Activated B cell treated with CpG ODN at 0.5 μM for 24 hours (primary cell): ENCODE measurements at regions of chr6 and their contacts with region 1.

Region 1: DNA sequence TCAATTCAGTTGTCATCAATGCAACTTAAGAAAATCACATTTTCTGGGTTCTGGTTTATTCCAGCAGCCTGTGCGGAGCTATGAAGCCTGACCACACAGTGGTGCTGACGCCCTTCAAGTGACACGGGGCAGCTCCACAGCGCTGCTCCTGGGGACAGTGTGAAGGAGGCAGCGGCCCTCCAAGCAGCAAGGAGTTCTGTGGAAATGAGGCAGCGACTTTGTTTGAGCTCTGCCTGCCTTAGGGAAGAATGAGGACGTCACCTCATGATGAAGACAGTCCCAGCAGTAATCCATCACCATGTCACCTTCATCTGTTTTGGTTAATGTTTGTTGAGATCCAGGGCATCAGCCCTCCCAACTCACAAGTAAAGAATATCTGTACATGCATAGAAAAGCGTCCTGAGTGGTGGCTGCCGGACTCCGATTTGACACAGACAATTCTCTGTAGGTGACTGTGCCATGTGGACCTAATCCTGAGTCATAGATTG is 168.5 kb upstream of the UST start:
- DNase-seq: peak; percentile 56
- ATAC-seq: peak; percentile 100
- H3K4me3 Mint-ChIP-seq: no peak overlapping the region
- H3K27ac Mint-ChIP-seq: peak overlapping the region; percentile 55
- H3K4me1 Mint-ChIP-seq: peaks cover 14% of the 10 kb centered on the region
- H3K27me3 Mint-ChIP-seq: peaks cover 7% of the 10 kb centered on the region
- CTCF ChIP-seq: no peak

Region 2: GRCh38 chr6:148677594-148678476 is 99.5 kb after region 1 on chr6:
- CTCF ChIA-PET with region 1: interaction called, 12 read pairs
- POLR2A ChIA-PET with region 1: interaction called, 4 read pairs
- intact Hi-C with region 1: no loop called
- DNase-seq: no peak
- ATAC-seq: peak; percentile 76
- H3K4me3 Mint-ChIP-seq: peak overlapping the region; percentile 56
- H3K27ac Mint-ChIP-seq: peak overlapping the region; percentile 86
- H3K4me1 Mint-ChIP-seq: peaks cover 67% of the 10 kb centered on the region
- H3K27me3 Mint-ChIP-seq: no peaks in the 10 kb centered on the region
- CTCF ChIP-seq: no peak

Region 3: DNA sequence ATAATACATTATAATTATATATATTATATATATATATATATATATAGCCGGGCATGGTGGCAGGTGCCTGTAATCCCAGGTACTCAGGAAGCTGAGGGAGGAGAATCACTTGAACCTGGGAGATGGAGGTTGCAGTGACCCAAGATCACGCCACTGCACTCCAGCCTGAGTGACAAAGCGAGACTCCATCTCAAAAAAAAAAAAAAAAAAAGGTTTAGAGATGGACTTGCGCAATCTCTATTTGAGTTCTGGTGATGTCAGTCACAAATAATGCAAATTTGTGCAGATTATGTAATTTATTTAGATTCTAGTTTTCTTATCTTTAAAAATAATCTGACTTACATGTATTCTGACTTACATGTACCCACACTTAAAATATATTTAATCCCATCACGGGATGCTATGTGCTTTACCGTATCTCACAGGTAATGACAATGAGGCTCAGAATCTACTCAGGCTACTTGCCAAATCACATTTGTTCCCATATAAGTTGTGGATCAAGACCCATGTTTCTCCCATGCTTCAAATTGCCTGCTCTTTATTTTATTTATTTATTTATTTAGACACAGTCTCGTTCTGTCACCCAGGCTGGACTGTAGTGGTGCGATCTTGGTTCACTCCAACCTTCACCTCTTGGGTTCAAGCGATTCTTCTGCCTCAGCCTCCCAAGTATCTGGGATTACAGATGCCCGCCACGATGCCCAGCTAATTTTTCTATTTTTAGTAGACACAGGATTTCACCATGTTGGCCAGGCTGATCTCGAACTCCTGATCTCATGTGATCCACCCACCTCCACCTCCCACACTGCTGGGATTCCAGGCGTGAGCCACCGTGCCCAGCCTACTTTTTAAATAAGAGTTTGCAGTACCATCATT is 160.9 kb after region 1 on chr6:
- CTCF ChIA-PET with region 1: interaction called, 11 read pairs
- POLR2A ChIA-PET with region 1: no interaction called
- intact Hi-C with region 1: no loop called
- DNase-seq: no peak
- ATAC-seq: no peak
- H3K4me3 Mint-ChIP-seq: no peak overlapping the region
- H3K27ac Mint-ChIP-seq: no peak overlapping the region
- H3K4me1 Mint-ChIP-seq: peaks cover 20% of the 10 kb centered on the region
- H3K27me3 Mint-ChIP-seq: no peaks in the 10 kb centered on the region
- CTCF ChIP-seq: no peak

Region 4: DNA sequence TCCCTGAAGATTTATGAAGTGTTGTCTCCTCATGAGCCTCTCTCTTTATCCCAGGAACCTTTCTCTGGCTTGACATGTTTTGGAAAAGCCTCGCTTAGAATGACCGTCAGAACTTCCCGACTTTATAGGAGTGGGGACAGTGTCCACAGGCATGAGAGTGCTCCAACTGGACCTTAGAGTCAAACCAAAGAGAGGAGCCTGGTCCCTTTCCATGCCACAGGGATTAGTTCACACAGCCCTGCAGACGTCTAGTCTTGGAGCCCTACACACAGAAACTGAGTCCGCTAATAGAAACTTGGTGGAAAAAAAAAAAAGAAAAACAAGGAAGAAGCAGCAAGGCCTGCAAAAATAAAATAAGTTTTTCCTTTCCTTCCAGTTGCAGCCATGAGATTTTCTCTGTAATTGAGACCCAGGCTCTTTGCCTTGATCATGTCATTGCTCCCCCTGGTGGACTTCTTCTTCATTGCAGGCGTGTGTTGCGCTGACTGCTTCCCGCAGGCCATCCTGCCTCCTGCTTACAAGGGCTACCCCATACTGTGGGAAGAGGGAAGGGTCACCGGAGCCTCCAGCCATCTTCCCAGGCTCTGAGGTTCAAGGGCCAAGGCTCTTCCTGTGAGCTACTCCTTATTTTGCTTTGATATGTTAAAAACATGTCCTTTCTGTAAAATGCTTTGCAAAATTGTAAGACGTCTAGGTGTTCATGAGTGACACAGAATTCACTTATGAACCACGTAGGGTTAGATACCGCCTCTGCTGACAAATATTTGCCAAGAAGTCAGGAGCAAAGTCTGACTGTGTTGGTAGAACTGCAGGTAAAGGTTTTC is 369.5 kb after region 1 on chr6:
- CTCF ChIA-PET with region 1: interaction called, 47 read pairs
- POLR2A ChIA-PET with region 1: no interaction called
- intact Hi-C with region 1: loop called (anchors 1 kb)
- DNase-seq: peak; percentile 61
- ATAC-seq: peak; percentile 96
- H3K4me3 Mint-ChIP-seq: no peak overlapping the region
- H3K27ac Mint-ChIP-seq: no peak overlapping the region
- H3K4me1 Mint-ChIP-seq: peaks cover 12% of the 10 kb centered on the region
- H3K27me3 Mint-ChIP-seq: no peaks in the 10 kb centered on the region
- CTCF ChIP-seq: peak; percentile 84

Region 5: GRCh38 chr6:149431905-149432775 is 853.9 kb after region 1 on chr6:
- CTCF ChIA-PET with region 1: interaction called, 18 read pairs
- POLR2A ChIA-PET with region 1: no interaction called
- intact Hi-C with region 1: loop called (anchors 5 kb)
- DNase-seq: peak; percentile 77
- ATAC-seq: peak; percentile 96
- H3K4me3 Mint-ChIP-seq: peak overlapping the region; percentile 44
- H3K27ac Mint-ChIP-seq: no peak overlapping the region
- H3K4me1 Mint-ChIP-seq: peaks cover 4% of the 10 kb centered on the region
- H3K27me3 Mint-ChIP-seq: no peaks in the 10 kb centered on the region
- CTCF ChIP-seq: no peak

Region 6: DNA sequence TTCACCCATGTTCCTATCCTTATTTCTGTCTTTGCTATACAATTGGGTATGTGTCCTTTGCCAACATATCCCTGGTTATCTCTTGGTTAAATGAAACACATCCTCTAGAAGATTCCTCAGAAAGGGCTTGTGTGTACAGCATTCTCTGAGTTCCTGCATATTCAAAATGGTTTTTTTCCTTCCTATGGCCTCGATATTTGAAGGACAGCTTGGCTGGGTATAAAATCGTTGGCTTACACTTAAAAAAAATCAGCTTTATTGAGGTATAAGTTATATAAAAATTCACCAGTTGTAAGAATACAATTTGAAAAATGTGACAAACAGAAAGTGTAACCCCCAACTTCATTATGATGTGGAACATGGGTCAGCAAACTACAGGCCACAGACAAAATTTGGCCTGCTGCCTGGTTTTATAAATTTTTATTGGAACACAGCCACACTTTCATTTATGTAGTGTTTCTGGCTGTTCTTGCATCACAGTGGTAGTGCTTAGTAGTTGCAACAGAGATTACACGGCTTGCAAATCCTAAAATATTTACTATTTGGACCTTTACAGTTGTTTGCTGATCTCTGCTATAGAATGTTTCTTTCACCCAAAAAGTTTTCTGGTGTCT is 1188.0 kb after region 1 on chr6:
- CTCF ChIA-PET with region 1: no interaction called
- POLR2A ChIA-PET with region 1: no interaction called
- intact Hi-C with region 1: no loop called
- DNase-seq: no peak
- ATAC-seq: no peak
- H3K4me3 Mint-ChIP-seq: no peak overlapping the region
- H3K27ac Mint-ChIP-seq: no peak overlapping the region
- H3K4me1 Mint-ChIP-seq: peaks cover 19% of the 10 kb centered on the region
- H3K27me3 Mint-ChIP-seq: no peaks in the 10 kb centered on the region
- CTCF ChIP-seq: no peak

Region 7: DNA sequence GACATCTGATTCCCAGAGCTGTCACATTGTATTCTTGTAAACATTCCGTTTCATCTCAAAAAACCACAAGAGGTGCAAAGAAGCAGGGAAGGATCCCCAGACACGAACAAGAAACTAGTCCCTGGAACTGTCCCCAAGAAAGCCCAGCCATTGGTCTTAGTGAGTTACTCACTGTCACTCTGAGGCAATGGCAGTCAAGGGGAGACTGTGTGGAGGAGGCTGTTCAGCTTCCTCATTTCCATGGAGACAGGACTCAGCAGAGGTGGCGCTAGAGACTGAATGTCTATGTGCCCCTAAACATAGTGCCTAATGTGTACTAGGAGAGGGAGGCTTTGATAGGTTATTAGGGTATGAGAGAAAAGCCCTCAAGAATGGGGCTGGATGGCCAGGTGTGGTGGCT is 1396.5 kb after region 1 on chr6:
- CTCF ChIA-PET with region 1: no interaction called
- POLR2A ChIA-PET with region 1: no interaction called
- intact Hi-C with region 1: no loop called
- DNase-seq: no peak
- ATAC-seq: no peak
- H3K4me3 Mint-ChIP-seq: no peak overlapping the region
- H3K27ac Mint-ChIP-seq: no peak overlapping the region
- H3K4me1 Mint-ChIP-seq: no peaks in the 10 kb centered on the region
- H3K27me3 Mint-ChIP-seq: peaks cover 45% of the 10 kb centered on the region
- CTCF ChIP-seq: no peak